ENCODE measurements at regions of chr10 and their contacts with region 1.

Region 1: DNA sequence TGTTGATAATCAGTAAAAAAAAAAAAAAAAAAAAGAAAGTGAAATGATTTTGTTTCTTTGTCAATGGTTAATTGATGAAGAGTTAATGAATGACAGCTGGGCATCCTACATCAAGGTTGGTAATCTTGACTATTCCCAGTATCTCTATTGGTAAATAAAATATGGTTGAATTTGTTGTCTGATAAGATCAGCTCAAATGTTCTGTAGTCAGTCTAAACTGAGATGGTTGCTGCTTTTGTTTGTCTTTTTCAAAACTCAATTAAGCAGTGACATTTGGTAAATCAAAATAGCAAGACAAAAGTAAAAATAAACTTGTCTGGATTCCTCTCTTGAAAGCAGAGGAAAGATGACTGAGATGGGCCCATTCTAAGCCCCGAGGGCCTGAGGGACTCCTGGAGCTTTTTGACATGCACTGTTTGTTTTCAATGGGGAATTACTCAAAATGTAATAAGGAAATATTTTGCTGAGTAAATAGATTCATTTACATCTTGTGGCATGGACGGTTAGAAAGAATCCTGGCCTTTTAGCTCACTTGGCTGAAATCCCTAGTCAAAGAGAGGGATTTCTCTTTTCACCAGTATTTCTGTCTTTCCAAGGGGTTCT is 108.2 kb downstream of the MKX start:
- DNase-seq: no peak
- H3K4me3 ChIP-seq: no peak overlapping the region
- H3K27ac ChIP-seq: no peak overlapping the region
- H3K4me1 ChIP-seq: no peaks in the 10 kb centered on the region
- H3K27me3 ChIP-seq: peaks cover 2% of the 10 kb centered on the region
- CTCF ChIP-seq: no peak

Region 2: DNA sequence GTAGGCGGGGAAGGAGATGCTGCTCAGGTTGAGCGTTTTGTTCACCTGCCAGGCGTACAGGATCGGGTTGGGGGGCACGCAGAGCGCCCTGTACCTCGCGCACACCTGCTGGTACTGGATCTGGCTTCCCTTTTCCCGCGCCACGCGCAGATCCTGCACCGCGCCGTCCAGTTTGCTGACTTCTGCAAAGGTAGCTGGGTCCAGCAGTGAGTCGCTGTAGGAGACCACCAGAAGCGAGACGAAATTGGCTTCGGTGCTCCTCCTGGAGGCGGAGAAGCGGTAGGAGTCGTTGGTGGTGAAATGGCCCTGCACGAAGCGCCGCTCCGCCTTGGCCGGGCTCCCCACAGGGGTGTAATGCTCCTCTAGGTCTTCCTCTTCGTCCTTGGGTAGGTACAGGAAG is 224.1 kb before region 1 on chr10:
- CTCF ChIA-PET with region 1: no interaction called
- dilution Hi-C with region 1: loop called (anchors 10 kb)
- in situ Hi-C with region 1: no loop called
- intact Hi-C with region 1: no loop called
- DNase-seq: no peak
- H3K4me3 ChIP-seq: no peak overlapping the region
- H3K27ac ChIP-seq: no peak overlapping the region
- H3K4me1 ChIP-seq: no peaks in the 10 kb centered on the region
- H3K27me3 ChIP-seq: no peaks in the 10 kb centered on the region
- CTCF ChIP-seq: no peak

Region 3: DNA sequence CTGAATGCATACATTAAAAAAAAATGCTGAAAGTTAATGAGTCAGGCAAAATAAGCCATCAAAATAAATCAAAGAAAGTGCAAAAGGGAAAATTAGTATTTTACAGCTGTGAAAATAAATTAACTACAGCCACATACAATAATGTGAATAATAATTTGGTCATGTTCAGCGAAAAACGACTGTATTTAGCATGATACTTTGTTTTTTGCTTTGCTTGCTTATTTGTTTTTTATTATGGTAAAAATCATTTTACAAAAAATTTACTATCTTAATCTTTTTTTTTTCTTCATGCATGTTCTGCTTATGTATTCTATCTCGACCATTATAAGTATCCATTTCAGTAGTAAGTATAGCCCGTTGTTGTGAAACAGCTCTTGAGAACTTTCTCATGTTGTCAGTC is 56.2 kb before region 1 on chr10:
- CTCF ChIA-PET with region 1: no interaction called
- dilution Hi-C with region 1: loop called (anchors 5 kb)
- in situ Hi-C with region 1: no loop called
- intact Hi-C with region 1: no loop called
- DNase-seq: no peak
- H3K4me3 ChIP-seq: no peak overlapping the region
- H3K27ac ChIP-seq: no peak overlapping the region
- H3K4me1 ChIP-seq: no peaks in the 10 kb centered on the region
- H3K27me3 ChIP-seq: no peaks in the 10 kb centered on the region
- CTCF ChIP-seq: no peak

Measured in mammary epithelial cell (primary cell).